Colonic mucosa (tissue), 4 donors: ENCODE measurements at regions of chr16 and their contacts with region 1.

Region 1: DNA sequence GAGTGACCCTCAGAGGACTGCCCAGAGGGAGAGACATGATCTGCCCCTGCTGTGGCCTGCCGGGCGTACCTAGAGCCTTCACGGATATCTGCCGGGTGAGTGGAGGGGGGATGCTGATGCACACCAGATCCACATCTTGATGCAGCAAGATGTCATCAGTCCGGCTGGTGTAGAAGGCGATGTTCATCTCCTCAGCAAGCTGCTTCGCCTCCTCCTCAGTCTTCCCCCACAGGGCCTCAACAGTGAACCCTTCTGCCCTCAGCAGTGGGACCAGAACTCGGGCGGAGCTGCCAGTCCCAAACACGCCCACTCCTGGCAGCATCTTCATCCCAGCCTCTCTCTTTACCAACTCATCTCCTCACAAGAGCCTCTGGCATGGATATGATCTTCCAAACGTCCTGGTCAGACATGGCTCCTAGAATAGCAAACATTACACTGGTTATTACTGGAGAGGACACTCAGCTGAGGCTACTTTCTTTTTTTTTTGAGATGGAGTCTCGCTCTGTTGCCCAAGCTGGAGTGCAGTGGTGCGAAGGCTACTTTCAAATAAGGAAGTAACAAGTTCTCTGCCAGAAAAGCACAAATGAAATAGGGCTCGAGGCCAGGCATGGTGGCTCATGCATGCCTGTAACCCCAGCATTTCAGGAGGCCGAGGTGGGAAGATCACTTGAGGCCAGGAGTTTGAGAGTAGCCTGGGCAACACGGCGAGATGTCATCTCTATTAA is 18.9 kb downstream of the C16orf86 start:
- DNase-seq: no peak
- H3K4me3 ChIP-seq: no peak overlapping the region
- H3K27ac ChIP-seq: no peak overlapping the region
- H3K4me1 ChIP-seq: no peaks in the 10 kb centered on the region
- H3K27me3 ChIP-seq: no peaks in the 10 kb centered on the region
- CTCF ChIP-seq: no peak

Region 2: GRCh38 chr16:68059804-68060203 is 374.3 kb after region 1 on chr16:
- intact Hi-C with region 1: loop called (anchors 10 kb)
- DNase-seq: no peak
- H3K4me3 ChIP-seq: no peak overlapping the region
- H3K27ac ChIP-seq: no peak overlapping the region
- H3K4me1 ChIP-seq: no peaks in the 10 kb centered on the region
- H3K27me3 ChIP-seq: no peaks in the 10 kb centered on the region
- CTCF ChIP-seq: no peak